ENCODE measurements at regions of chr1 and their contacts with region 1.

Region 1: GRCh38 chr1:232292818-232293217 is 337.1 kb downstream of the SIPA1L2 start:
- DNase-seq: peak; percentile 80
- H3K4me3 Mint-ChIP-seq: peak overlapping the region; percentile 46
- H3K27ac Mint-ChIP-seq: peak overlapping the region; percentile 26
- H3K4me1 Mint-ChIP-seq: peaks cover 49% of the 10 kb centered on the region
- H3K27me3 Mint-ChIP-seq: no peaks in the 10 kb centered on the region
- CTCF ChIP-seq: peak; percentile 8

Region 2: DNA sequence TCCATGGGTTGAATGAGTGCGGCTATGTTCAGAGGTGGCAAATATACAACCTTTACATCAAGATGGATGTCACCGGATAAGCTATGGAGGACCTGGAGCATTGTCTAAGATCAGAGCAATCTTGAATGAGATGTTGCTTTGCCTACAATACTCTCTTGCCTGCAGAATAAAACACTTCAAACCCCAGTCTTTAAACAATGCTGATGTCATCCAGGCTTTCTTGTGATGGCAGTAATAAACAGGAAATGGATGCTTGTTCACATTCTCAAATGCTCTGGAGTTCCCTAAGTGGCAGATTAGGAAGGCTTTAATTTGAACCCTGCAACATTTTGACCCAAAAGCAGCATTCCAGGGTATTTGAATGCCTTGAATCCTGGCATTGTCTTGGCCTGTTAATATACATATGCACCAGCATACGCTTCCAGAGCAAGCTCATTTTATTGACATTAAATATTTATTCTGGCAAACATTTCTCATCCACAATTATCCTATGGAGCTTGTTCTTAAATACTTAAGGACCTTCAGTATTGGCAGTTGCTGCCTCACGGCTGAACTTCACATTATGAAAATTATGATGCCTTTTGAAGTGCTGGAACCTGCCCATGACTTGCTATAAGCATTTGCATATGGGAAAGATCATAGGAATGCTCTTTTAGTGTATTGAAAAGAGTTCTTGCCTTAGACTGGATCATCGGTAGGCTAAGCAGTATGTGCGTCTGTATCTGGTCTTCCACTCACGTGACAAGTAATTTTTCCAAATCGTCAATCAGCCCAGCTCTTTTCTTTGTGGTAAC is 85.5 kb before region 1 on chr1:
- CTCF ChIA-PET with region 1: no interaction called
- POLR2A ChIA-PET with region 1: no interaction called
- intact Hi-C with region 1: no loop called
- DNase-seq: no peak
- H3K4me3 Mint-ChIP-seq: no peak overlapping the region
- H3K27ac Mint-ChIP-seq: no peak overlapping the region
- H3K4me1 Mint-ChIP-seq: no peaks in the 10 kb centered on the region
- H3K27me3 Mint-ChIP-seq: no peaks in the 10 kb centered on the region
- CTCF ChIP-seq: no peak

Region 3: GRCh38 chr1:232248276-232248820 is 44.5 kb before region 1 on chr1:
- CTCF ChIA-PET with region 1: no interaction called
- POLR2A ChIA-PET with region 1: no interaction called
- intact Hi-C with region 1: no loop called
- DNase-seq: no peak
- H3K4me3 Mint-ChIP-seq: no peak overlapping the region
- H3K27ac Mint-ChIP-seq: no peak overlapping the region
- H3K4me1 Mint-ChIP-seq: no peaks in the 10 kb centered on the region
- H3K27me3 Mint-ChIP-seq: no peaks in the 10 kb centered on the region
- CTCF ChIP-seq: no peak

Region 4: GRCh38 chr1:232306269-232306961 is 13.6 kb after region 1 on chr1:
- CTCF ChIA-PET with region 1: interaction called, 5 read pairs
- POLR2A ChIA-PET with region 1: interaction called, 20 read pairs
- intact Hi-C with region 1: no loop called
- DNase-seq: peak; percentile 42
- H3K4me3 Mint-ChIP-seq: no peak overlapping the region
- H3K27ac Mint-ChIP-seq: no peak overlapping the region
- H3K4me1 Mint-ChIP-seq: peaks cover 16% of the 10 kb centered on the region
- H3K27me3 Mint-ChIP-seq: no peaks in the 10 kb centered on the region
- CTCF ChIP-seq: peak; percentile 17

Region 5: DNA sequence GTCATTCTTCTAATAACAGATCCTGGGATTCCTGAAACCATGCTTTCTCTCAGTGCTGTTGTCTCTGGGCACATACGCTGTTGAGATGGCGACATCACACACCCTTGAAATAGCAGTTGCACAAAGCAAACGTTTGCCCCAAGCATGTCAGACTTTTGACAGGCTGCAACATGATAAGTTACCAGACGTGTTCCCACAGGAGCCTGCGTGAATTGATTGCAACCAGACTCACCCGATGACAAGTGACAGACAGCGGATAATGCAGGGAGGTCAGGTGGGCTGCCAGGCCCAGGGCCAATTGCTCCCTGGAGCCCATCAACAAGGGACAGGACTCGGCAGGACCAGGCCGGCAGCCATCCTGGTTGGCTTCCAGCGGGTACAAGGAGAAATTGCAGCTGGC is 26.3 kb after region 1 on chr1:
- CTCF ChIA-PET with region 1: interaction called, 4 read pairs
- POLR2A ChIA-PET with region 1: interaction called, 13 read pairs
- intact Hi-C with region 1: loop called (anchors 2 kb)
- DNase-seq: peak; percentile 74
- H3K4me3 Mint-ChIP-seq: no peak overlapping the region
- H3K27ac Mint-ChIP-seq: no peak overlapping the region
- H3K4me1 Mint-ChIP-seq: peaks cover 25% of the 10 kb centered on the region
- H3K27me3 Mint-ChIP-seq: no peaks in the 10 kb centered on the region
- CTCF ChIP-seq: no peak

Region 6: GRCh38 chr1:232334246-232335210 is 41.7 kb after region 1 on chr1:
- CTCF ChIA-PET with region 1: no interaction called
- POLR2A ChIA-PET with region 1: interaction called, 10 read pairs
- intact Hi-C with region 1: no loop called
- DNase-seq: peak; percentile 99
- H3K4me3 Mint-ChIP-seq: no peak overlapping the region
- H3K27ac Mint-ChIP-seq: no peak overlapping the region
- H3K4me1 Mint-ChIP-seq: peaks cover 26% of the 10 kb centered on the region
- H3K27me3 Mint-ChIP-seq: peaks cover 18% of the 10 kb centered on the region
- CTCF ChIP-seq: no peak

Region 7: GRCh38 chr1:232385221-232385620 is 92.4 kb after region 1 on chr1:
- CTCF ChIA-PET with region 1: no interaction called
- POLR2A ChIA-PET with region 1: interaction called, 12 read pairs
- intact Hi-C with region 1: no loop called
- DNase-seq: peak; percentile 88
- H3K4me3 Mint-ChIP-seq: no peak overlapping the region
- H3K27ac Mint-ChIP-seq: peak overlapping the region; percentile 1
- H3K4me1 Mint-ChIP-seq: peaks cover 27% of the 10 kb centered on the region
- H3K27me3 Mint-ChIP-seq: no peaks in the 10 kb centered on the region
- CTCF ChIP-seq: no peak